ENCODE measurements at regions of chr17 and their contacts with region 1.

Region 1: DNA sequence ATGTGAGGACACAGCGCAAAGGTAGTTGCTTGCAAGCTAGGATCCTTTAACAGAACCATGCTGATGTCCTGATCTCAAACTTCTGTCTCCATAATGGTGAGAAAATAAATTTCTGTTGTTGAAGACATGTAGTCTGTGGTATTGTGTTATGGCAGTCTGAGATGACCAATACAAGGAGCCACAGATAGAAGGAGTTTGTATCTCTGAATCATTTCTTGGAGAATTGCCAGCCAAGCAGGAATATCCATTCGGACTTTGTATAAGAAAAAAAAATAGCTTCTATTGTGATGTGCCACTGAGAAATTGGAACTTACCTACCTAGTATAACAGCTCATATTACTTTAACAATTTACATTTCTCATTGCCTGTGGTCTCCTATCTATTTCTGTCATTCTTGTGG is 447.6 kb upstream of the CA10 start:
- DNase-seq: no peak
- ATAC-seq: no peak
- H3K4me3 Mint-ChIP-seq: no peak overlapping the region
- H3K27ac Mint-ChIP-seq: no peak overlapping the region
- H3K4me1 Mint-ChIP-seq: no peaks in the 10 kb centered on the region
- H3K27me3 Mint-ChIP-seq: no peaks in the 10 kb centered on the region

Region 2: DNA sequence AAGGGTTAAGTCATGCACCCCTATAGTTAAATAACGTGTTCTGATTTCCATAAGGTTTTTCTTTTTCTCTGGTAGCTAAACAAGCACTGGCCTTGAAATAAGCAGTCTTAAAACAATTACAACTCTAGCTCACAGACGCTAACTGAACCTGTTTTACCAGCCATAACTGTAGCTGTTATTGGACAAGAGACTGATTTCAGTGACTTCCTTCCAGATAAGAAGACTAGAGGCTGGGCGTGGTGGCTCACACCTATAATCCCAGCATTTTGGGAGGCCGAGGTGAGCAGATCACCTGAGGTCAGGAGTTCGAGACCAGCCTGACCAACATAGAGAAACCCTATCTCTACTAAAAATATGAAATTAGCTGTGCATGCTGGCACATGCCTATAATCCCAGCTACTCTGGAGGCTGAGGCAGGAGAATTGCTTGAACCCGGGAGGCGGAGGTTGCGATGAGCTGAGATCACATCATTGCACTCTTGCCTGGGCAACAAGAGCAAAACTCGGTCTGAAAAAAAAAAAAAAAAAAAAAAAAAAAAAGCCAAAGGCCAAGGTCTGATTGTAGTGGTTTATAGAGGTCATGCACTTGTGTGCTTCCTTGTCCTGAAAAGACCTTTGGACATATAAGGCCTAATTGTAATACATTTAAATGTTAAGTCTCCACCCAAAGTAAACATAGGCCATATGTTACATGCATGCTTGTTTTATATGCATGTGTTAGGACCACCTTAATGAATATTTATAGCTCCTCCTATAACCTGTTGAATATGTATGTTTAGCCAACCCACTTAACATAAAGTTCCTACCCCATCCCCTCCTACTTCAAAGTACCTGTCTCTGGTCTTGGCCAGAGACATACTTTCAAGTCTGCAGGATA is 128.0 kb before region 1 on chr17:
- CTCF ChIA-PET with region 1: no interaction called
- POLR2A ChIA-PET with region 1: no interaction called
- intact Hi-C with region 1: no loop called
- DNase-seq: no peak
- ATAC-seq: no peak
- H3K4me3 Mint-ChIP-seq: no peak overlapping the region
- H3K27ac Mint-ChIP-seq: no peak overlapping the region
- H3K4me1 Mint-ChIP-seq: no peaks in the 10 kb centered on the region
- H3K27me3 Mint-ChIP-seq: no peaks in the 10 kb centered on the region

Region 3: DNA sequence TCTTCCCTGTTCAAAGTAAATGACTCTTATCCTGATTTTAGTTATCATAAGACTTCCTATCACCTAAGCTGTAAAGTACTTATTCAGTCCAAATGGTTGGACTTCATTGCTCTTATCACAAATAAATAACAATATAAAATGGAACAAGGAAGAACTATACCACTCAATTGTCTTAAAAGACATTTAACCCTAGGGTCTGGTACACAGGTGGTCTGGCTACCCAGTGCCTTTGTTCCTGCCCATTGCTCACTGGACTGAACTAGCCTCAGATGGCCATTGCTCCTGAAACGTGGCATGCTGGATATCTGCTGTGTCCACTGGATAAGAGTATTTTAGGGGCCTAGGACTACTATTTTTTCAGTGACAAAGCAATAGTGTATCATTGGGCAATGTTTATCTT is 126.7 kb after region 1 on chr17:
- CTCF ChIA-PET with region 1: no interaction called
- POLR2A ChIA-PET with region 1: interaction called, 10 read pairs
- intact Hi-C with region 1: no loop called
- DNase-seq: no peak
- ATAC-seq: no peak
- H3K4me3 Mint-ChIP-seq: no peak overlapping the region
- H3K27ac Mint-ChIP-seq: no peak overlapping the region
- H3K4me1 Mint-ChIP-seq: no peaks in the 10 kb centered on the region
- H3K27me3 Mint-ChIP-seq: no peaks in the 10 kb centered on the region